Activated B cell treated with CpG ODN at 0.5 μM for 24 hours (primary cell): ENCODE measurements at regions of chr17 and their contacts with region 1.

Region 1: GRCh38 chr17:17001874-17002520 is 30.1 kb upstream of the TNFRSF13B start:
- DNase-seq: peak; percentile 76
- ATAC-seq: peak; percentile 97
- H3K4me3 Mint-ChIP-seq: no peak overlapping the region
- H3K27ac Mint-ChIP-seq: no peak overlapping the region
- H3K4me1 Mint-ChIP-seq: peaks cover 4% of the 10 kb centered on the region
- H3K27me3 Mint-ChIP-seq: no peaks in the 10 kb centered on the region
- CTCF ChIP-seq: peak; percentile 92

Region 2: DNA sequence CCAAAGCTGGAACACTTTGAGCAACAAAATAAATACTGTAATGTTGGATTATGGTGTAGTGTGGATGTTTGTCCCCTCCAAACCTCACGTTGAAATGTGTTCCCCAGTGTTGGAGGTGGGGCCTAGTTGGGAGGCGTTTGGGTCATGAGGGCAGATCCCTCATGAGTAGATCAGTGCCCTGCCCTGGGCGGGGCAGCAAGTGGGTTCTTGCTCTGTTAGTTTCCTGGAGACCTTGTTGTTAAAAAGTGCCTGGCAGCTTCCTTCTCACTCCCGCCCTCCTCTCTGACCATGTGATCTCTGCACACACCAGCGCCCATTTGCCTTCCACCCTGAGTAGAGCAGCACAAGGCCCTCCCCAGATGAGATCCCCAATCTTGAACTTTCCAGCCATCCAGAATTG is 107.9 kb after region 1 on chr17:
- CTCF ChIA-PET with region 1: no interaction called
- POLR2A ChIA-PET with region 1: no interaction called
- intact Hi-C with region 1: loop called (anchors 5 kb)
- DNase-seq: no peak
- ATAC-seq: peak; percentile 75
- H3K4me3 Mint-ChIP-seq: peak overlapping the region; percentile 49
- H3K27ac Mint-ChIP-seq: peak overlapping the region; percentile 73
- H3K4me1 Mint-ChIP-seq: peaks cover 87% of the 10 kb centered on the region
- H3K27me3 Mint-ChIP-seq: no peaks in the 10 kb centered on the region
- CTCF ChIP-seq: no peak

Region 3: DNA sequence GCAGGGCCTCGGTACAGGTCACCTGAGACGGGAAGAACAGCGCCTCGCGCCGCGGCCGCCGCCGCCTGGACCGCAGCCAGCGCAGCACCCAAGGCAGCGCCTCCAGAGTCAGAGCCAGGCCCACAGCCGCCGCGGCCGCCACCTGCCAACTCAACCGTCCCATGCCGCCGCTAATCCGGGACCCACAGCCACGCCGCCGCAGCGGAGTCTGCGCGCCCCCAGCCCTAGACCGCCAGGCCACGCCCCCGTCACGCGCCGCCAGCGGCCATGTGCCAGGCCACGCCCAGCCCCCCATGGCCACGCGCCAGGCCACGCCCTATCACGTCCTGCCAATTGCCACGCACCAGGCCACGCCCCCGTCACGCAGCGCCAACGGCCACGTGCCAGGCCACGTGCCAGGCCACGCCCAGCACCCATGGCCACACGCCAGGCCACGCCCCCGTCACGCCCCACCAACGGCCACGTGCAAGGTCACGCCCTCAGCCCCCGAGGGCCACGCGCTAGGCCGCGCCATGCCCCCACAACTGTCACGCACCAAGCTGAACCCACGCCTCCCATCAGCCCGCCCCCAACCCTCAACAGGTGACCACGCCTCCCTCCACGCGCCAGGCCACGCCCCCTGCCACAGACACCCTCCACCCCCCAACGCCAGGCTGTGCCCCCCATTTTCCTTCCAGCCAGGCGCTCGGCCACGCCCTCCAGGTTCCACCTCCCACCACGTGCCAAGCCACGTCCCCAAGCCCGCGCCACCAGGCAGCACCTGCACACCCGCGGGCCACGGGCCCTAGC is 204.3 kb after region 1 on chr17 and contains the start of gene PLD6:
- CTCF ChIA-PET with region 1: no interaction called
- POLR2A ChIA-PET with region 1: no interaction called
- intact Hi-C with region 1: loop called (anchors 1 kb)
- DNase-seq: peak; percentile 84
- ATAC-seq: peak; percentile 81
- H3K4me3 Mint-ChIP-seq: peak within 1 kb of the TSS; percentile 87
- H3K27ac Mint-ChIP-seq: peak within 1 kb of the TSS; percentile 83
- H3K4me1 Mint-ChIP-seq: peaks cover 23% of the 10 kb centered on the region
- H3K27me3 Mint-ChIP-seq: no peaks in the 10 kb centered on the region
- CTCF ChIP-seq: no peak
- total RNA-seq, gene PLD6: 6.2 and 7.6 TPM in 2 replicates